Calu3 (cell line): ENCODE measurements at regions of chr1 and their contacts with region 1.

Region 1: GRCh38 chr1:17922833-17923232 is 167.7 kb downstream of the ACTL8 start:
- DNase-seq: peak; percentile 31
- H3K4me3 Mint-ChIP-seq: no peak overlapping the region
- H3K27ac Mint-ChIP-seq: no peak overlapping the region
- H3K4me1 Mint-ChIP-seq: no peaks in the 10 kb centered on the region
- H3K27me3 Mint-ChIP-seq: peaks cover 69% of the 10 kb centered on the region
- CTCF ChIP-seq: peak; percentile 14

Region 2: DNA sequence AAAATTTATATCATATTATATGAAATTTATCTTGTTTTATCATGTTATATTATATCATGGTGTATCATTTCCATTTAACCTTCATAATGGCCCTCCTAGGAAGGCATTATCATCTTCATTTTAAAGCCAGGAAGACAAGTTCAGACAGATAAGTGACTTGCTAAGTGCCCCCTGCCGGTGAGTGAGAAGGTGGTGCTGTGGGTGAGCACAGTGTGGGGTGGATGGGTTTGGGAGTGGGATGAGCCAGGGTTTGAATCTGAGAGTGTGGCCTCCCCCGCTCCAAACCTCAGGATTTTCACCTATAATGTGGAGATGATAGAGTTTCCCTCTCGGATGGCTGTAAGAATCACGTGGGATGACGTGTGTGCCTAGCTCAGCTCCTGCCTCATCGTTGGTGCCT is 76.1 kb after region 1 on chr1:
- CTCF ChIA-PET with region 1: no interaction called
- intact Hi-C with region 1: no loop called
- DNase-seq: peak; percentile 2
- H3K4me3 Mint-ChIP-seq: no peak overlapping the region
- H3K27ac Mint-ChIP-seq: no peak overlapping the region
- H3K4me1 Mint-ChIP-seq: no peaks in the 10 kb centered on the region
- H3K27me3 Mint-ChIP-seq: peaks cover 70% of the 10 kb centered on the region
- CTCF ChIP-seq: no peak

Region 3: GRCh38 chr1:18100491-18101063 is 177.7 kb after region 1 on chr1:
- CTCF ChIA-PET with region 1: no interaction called
- intact Hi-C with region 1: loop called (anchors 10 kb)
- DNase-seq: peak; percentile 42
- H3K4me3 Mint-ChIP-seq: no peak overlapping the region
- H3K27ac Mint-ChIP-seq: no peak overlapping the region
- H3K4me1 Mint-ChIP-seq: no peaks in the 10 kb centered on the region
- H3K27me3 Mint-ChIP-seq: peaks cover 88% of the 10 kb centered on the region
- CTCF ChIP-seq: peak; percentile 40

Region 4: GRCh38 chr1:18217398-18218043 is 294.7 kb after region 1 on chr1:
- CTCF ChIA-PET with region 1: no interaction called
- intact Hi-C with region 1: loop called (anchors 10 kb)
- DNase-seq: peak; percentile 17
- H3K4me3 Mint-ChIP-seq: no peak overlapping the region
- H3K27ac Mint-ChIP-seq: no peak overlapping the region
- H3K4me1 Mint-ChIP-seq: no peaks in the 10 kb centered on the region
- H3K27me3 Mint-ChIP-seq: peaks cover 94% of the 10 kb centered on the region
- CTCF ChIP-seq: no peak

Region 5: GRCh38 chr1:18575620-18576019 is 652.8 kb after region 1 on chr1:
- CTCF ChIA-PET with region 1: interaction called, 4 read pairs
- intact Hi-C with region 1: loop called (anchors 10 kb)
- DNase-seq: peak; percentile 80
- H3K4me3 Mint-ChIP-seq: no peak overlapping the region
- H3K27ac Mint-ChIP-seq: no peak overlapping the region
- H3K4me1 Mint-ChIP-seq: no peaks in the 10 kb centered on the region
- H3K27me3 Mint-ChIP-seq: peaks cover 59% of the 10 kb centered on the region
- CTCF ChIP-seq: peak; percentile 85